Activated CD8-positive, alpha-beta T cell treated with anti-CD3 and anti-CD28 coated beads for 36 hours (primary cell): ENCODE measurements at regions of chr2 and their contacts with region 1.

Region 1: DNA sequence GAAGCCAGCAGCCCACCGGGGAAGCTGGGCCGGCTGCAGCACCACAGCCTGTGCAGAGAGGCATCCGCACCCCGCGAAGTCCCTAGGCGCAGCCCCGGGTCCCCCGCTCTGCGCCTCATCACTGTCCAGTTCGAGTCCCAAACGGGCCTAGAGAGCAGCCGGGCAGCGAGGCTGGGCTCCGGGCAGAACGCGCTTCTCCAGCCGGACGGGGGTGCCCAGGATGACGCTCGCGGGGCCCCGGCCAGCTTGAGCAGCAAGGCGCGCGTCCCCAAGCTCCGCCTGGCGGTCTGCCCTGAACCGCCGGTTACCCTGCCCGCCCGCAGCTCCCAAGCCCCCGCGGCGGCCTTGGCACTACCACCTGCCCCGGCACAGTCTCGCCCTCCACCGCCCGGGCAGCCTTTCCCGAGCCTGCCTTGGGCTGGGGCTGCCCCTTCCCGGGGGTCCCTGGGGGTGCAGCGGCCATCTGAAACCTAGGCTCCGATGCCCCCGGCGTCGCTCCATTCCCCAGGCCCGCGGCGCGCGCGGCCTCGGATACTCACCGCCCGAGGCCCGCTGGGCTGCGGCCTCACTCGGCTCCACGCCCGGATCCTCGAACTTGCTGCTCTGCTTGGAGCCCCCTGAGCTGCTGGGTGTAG is 591 bp downstream of the SLC16A14 start:
- DNase-seq: peak; percentile 61
- ATAC-seq: peak; percentile 41
- H3K4me3 Mint-ChIP-seq: peak overlapping the region; percentile 92
- H3K27ac Mint-ChIP-seq: peak overlapping the region; percentile 64
- H3K4me1 Mint-ChIP-seq: peaks cover 19% of the 10 kb centered on the region
- H3K27me3 Mint-ChIP-seq: peaks cover 22% of the 10 kb centered on the region
- CTCF ChIP-seq: no peak

Region 2: GRCh38 chr2:230007931-230008707 is 60.0 kb before region 1 on chr2:
- CTCF ChIA-PET with region 1: interaction called, 34 read pairs
- POLR2A ChIA-PET with region 1: interaction called, 3 read pairs
- intact Hi-C with region 1: loop called (anchors 5 kb)
- DNase-seq: peak; percentile 89
- ATAC-seq: peak; percentile 74
- H3K4me3 Mint-ChIP-seq: no peak overlapping the region
- H3K27ac Mint-ChIP-seq: no peak overlapping the region
- H3K4me1 Mint-ChIP-seq: peaks cover 10% of the 10 kb centered on the region
- H3K27me3 Mint-ChIP-seq: no peaks in the 10 kb centered on the region
- CTCF ChIP-seq: peak; percentile 91

Region 3: DNA sequence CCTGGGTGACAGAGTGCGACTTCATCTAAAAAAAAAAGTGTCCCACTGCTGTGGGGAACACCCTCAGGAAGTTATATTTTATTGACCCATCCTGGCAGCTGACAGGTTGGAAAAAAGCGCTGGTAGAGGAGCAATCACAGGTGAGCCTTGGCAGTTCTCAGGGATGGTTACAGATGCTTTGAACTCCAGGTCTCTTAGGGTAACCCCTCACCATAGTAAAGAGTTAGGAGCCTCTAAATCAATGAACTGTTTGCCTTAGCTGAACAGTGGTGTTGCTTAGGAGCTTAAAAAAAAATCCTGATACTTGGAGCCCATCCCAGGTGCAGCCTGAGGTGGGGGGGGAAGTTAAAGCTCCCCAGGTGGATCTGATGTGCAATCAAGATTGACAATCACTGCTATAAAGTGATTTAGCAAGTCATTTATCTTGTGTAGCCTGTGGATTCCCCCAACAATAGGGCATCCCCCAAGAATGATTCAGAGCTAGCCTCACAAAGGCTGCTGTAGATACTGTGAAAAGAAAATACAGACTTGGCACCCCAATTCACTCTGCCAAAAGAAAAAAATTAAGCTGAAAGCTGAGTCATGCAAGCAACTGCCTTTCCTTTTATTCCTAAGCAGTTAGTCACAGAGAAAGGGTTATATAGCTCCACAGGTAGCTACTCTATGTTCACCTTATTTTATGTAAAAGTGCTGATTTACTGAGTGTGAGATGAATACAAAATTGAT is 14.2 kb before region 1 on chr2:
- CTCF ChIA-PET with region 1: interaction called, 51 read pairs
- POLR2A ChIA-PET with region 1: interaction called, 3 read pairs
- intact Hi-C with region 1: no loop called
- DNase-seq: peak; percentile 42
- ATAC-seq: peak; percentile 87
- H3K4me3 Mint-ChIP-seq: no peak overlapping the region
- H3K27ac Mint-ChIP-seq: no peak overlapping the region
- H3K4me1 Mint-ChIP-seq: peaks cover 15% of the 10 kb centered on the region
- H3K27me3 Mint-ChIP-seq: no peaks in the 10 kb centered on the region
- CTCF ChIP-seq: no peak

Region 4: GRCh38 chr2:230085201-230085600 is 17.1 kb after region 1 on chr2:
- CTCF ChIA-PET with region 1: interaction called, 16 read pairs
- POLR2A ChIA-PET with region 1: no interaction called
- intact Hi-C with region 1: no loop called
- DNase-seq: no peak
- ATAC-seq: no peak
- H3K4me3 Mint-ChIP-seq: no peak overlapping the region
- H3K27ac Mint-ChIP-seq: no peak overlapping the region
- H3K4me1 Mint-ChIP-seq: no peaks in the 10 kb centered on the region
- H3K27me3 Mint-ChIP-seq: peaks cover 2% of the 10 kb centered on the region
- CTCF ChIP-seq: no peak

Region 5: DNA sequence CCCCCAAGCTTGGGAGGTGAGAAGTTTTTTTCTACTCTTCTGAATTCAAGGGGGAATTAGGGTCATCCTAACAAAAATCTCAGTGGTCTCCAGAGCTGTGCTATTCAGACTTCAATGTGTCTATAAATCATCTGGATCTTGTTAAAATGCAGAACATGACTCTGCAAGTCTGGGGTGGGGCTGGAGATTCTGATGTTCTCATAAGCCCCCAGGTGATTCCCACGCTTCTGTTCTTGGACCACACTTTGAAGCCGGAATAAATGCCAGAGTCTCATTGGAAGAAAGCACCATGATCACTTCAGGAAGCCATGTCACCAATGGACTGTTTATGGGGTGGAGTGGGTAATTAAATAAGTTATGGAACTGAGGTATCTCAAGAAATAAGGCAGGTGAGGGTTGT is 22.8 kb after region 1 on chr2:
- CTCF ChIA-PET with region 1: interaction called, 19 read pairs
- POLR2A ChIA-PET with region 1: no interaction called
- intact Hi-C with region 1: no loop called
- DNase-seq: no peak
- ATAC-seq: no peak
- H3K4me3 Mint-ChIP-seq: no peak overlapping the region
- H3K27ac Mint-ChIP-seq: no peak overlapping the region
- H3K4me1 Mint-ChIP-seq: no peaks in the 10 kb centered on the region
- H3K27me3 Mint-ChIP-seq: peaks cover 10% of the 10 kb centered on the region
- CTCF ChIP-seq: no peak

Region 6: GRCh38 chr2:230130668-230131364 is 62.7 kb after region 1 on chr2:
- CTCF ChIA-PET with region 1: no interaction called
- POLR2A ChIA-PET with region 1: no interaction called
- intact Hi-C with region 1: no loop called
- DNase-seq: no peak
- ATAC-seq: no peak
- H3K4me3 Mint-ChIP-seq: no peak overlapping the region
- H3K27ac Mint-ChIP-seq: no peak overlapping the region
- H3K4me1 Mint-ChIP-seq: peaks cover 3% of the 10 kb centered on the region
- H3K27me3 Mint-ChIP-seq: peaks cover 1% of the 10 kb centered on the region
- CTCF ChIP-seq: no peak

Region 7: DNA sequence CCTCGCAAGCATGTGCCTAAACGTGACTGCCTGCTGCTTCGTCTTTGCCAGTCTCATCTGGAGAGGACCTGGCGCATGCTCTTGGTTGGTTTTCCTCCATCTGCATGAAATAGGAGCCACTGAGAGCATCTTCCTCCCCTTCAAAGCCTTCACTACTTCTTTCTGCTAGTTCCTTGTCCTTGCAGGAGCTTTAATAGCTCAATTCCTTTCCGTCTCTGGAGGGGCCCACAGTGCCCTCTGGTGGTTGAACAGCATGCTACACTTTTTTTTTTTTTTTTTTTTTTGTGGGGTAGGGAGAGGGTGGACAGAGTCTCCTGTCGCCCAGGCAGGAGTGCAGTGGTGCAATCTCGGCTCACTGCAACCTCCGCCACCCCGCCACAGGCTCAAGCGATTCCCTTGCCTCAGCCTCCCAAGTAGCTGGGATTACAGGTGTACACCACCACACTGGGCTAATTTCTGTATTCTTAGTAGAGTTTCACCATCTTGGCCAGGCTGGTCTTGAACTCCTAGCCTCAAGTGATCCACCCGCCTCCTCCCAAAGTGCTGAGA is 92.1 kb after region 1 on chr2:
- CTCF ChIA-PET with region 1: interaction called, 71 read pairs
- POLR2A ChIA-PET with region 1: interaction called, 5 read pairs
- intact Hi-C with region 1: loop called (anchors 5 kb)
- DNase-seq: peak; percentile 61
- ATAC-seq: peak; percentile 62
- H3K4me3 Mint-ChIP-seq: no peak overlapping the region
- H3K27ac Mint-ChIP-seq: no peak overlapping the region
- H3K4me1 Mint-ChIP-seq: peaks cover 8% of the 10 kb centered on the region
- H3K27me3 Mint-ChIP-seq: no peaks in the 10 kb centered on the region
- CTCF ChIP-seq: peak; percentile 92

Region 8: GRCh38 chr2:230170532-230170931 is 102.4 kb after region 1 on chr2:
- CTCF ChIA-PET with region 1: interaction called, 12 read pairs
- POLR2A ChIA-PET with region 1: no interaction called
- intact Hi-C with region 1: no loop called
- DNase-seq: peak; percentile 20
- ATAC-seq: no peak
- H3K4me3 Mint-ChIP-seq: no peak overlapping the region
- H3K27ac Mint-ChIP-seq: peak overlapping the region; percentile 27
- H3K4me1 Mint-ChIP-seq: peaks cover 6% of the 10 kb centered on the region
- H3K27me3 Mint-ChIP-seq: no peaks in the 10 kb centered on the region
- CTCF ChIP-seq: no peak